Heart right ventricle (tissue), 16 donors: ENCODE measurements at regions of chr1 and their contacts with region 1.

Region 1: DNA sequence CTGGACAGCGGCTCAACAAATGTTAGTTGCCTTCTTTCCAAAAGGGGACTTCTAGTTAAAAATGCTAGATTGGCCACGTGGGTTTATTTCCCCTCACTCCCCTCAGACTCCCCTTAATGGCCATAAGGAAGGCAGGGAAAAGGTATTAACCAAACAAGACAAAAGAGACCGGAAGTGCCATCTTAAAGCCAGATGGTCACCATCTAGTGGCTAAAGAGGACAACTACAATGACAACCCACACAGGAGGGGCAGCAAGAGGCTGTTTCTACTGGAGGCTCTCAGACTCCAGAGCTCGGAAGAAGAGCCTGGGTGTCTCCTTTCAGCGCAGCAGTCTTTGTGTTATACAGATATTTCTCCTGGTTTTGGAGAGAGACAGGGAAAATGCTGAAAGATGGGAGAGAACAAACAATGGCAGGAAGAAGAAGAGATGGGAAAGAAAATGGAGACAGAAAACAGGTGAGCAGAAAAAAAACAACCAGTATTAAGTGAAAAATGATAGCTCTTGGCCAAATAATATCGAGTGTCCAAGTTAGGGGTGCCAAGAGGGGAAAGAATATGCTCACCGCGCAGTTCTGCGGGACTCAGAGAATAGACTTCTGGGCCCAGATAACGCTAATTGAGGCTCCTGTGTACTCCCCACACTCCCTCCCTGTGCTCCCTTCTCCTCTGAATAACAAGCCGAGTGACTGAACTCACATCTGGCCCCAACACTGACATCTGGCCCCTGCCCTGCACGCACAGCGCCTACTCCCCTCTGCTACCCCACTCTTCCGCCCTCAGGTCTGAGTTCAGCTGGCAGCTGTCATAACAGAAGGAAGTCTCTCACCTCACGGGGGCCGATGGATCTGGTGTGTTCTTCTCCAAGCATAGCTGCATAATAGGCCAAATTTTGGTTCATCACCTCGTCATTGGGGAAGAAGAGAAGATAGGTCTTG is 9.6 kb downstream of the P3H1 start:
- DNase-seq: no peak
- ATAC-seq: peak in 5 of 8 donors; percentile 46 to 73 (median 66)
- H3K4me3 ChIP-seq: no peak overlapping the region
- H3K27ac ChIP-seq: no peak overlapping the region
- H3K4me1 ChIP-seq: peaks cover 0 to 10% (median under 1%) of the 10 kb centered on the region in 9 donors
- H3K27me3 ChIP-seq: no peaks in the 10 kb centered on the region
- CTCF ChIP-seq: peak; percentile 43 to 76 (median 65)

Region 2: DNA sequence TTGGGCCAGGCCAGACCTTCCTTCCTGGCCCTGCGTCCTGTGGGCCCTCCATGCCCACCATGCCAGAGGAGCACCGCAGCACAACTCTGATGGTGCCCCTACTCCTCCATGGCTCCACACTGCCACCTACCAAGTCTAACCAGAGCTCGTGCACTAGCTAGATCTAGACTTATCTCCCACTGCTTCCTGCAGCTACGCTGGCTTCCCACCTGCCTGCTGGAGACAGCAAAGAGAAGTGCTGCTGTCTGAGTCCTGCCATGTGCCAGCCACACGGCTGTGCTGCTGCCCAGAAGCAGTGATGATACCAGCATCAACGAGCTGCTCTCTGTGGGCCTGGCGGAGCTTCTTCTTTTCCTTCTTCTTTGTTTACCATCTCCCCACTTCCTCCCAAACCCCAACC is 599.6 kb before region 1 on chr1:
- intact Hi-C with region 1: loop called in 1 of 10 experiments (anchors 10 kb)
- DNase-seq: no peak
- ATAC-seq: no peak
- H3K4me3 ChIP-seq: no peak overlapping the region
- H3K27ac ChIP-seq: no peak overlapping the region
- H3K4me1 ChIP-seq: peaks cover 0 to under 1% (median 0%) of the 10 kb centered on the region in 9 donors
- H3K27me3 ChIP-seq: no peaks in the 10 kb centered on the region
- CTCF ChIP-seq: no peak

Region 3: DNA sequence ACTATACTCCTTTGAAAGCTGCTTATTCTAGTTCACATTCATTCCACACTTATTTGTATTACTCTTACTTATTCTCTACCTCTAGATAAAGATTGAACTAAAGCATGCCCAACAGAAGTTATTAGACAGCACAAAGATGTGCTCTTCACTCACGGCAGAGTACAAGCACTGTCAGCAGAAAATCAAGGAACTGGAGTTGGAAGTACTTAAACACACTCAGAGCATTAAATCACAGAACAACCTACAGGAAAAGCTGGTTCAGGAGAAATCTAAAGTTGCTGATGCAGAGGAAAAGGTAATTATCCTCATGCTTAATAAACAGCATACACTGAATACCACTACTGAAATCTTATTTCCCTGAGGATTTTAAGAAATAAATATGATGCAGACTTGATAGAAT is 180.3 kb before region 1 on chr1:
- intact Hi-C with region 1: loop called in 1 of 10 experiments (anchors 5 kb)
- DNase-seq: no peak
- ATAC-seq: no peak
- H3K4me3 ChIP-seq: no peak overlapping the region
- H3K27ac ChIP-seq: no peak overlapping the region
- H3K4me1 ChIP-seq: no peaks in the 10 kb centered on the region
- H3K27me3 ChIP-seq: no peaks in the 10 kb centered on the region
- CTCF ChIP-seq: no peak

Region 4: GRCh38 chr1:42657971-42658879 is 99.0 kb before region 1 on chr1 and contains the start of gene PPIH:
- intact Hi-C with region 1: loop called in 1 of 10 experiments (anchors 5 kb)
- DNase-seq: peak; percentile 95
- ATAC-seq: peak; percentile 100
- H3K4me3 ChIP-seq: peak within 1 kb of the TSS; percentile 54 to 99 (median 82)
- H3K27ac ChIP-seq: peak within 1 kb of the TSS in 9 of 10 donors; percentile 65 to 90 (median 85)
- H3K4me1 ChIP-seq: peaks cover 0 to 24% (median 13%) of the 10 kb centered on the region in 9 donors
- H3K27me3 ChIP-seq: no peaks in the 10 kb centered on the region
- CTCF ChIP-seq: peak in 8 of 9 donors; percentile 9 to 50 (median 35)
- total RNA-seq, gene PPIH: 15.2 to 23.0 (median 18.3) TPM